ENCODE measurements at regions of chr6 and their contacts with region 1.

Region 1: GRCh38 chr6:2988426-2989331 is 11.0 kb upstream of the NQO2 start:
- DNase-seq: peak; percentile 93 to 96 (median 94)
- ATAC-seq: peak; percentile 80 to 93 (median 88)
- H3K4me3 ChIP-seq: peak overlapping the region; percentile 69 to 93 (median 80)
- H3K27ac ChIP-seq: peak overlapping the region; percentile 92 to 100 (median 99)
- H3K4me1 ChIP-seq: peaks cover 0 to 29% (median 18%) of the 10 kb centered on the region in 12 donors
- H3K27me3 ChIP-seq: no peaks in the 10 kb centered on the region
- CTCF ChIP-seq: peak; percentile 76 to 94 (median 88)
- POLR2A ChIP-seq: peak in 1 of 2 donors; percentile 84

Region 2: GRCh38 chr6:2841264-2842138 is 147.2 kb before region 1 on chr6 and contains the start of gene SERPINB1:
- intact Hi-C with region 1: loop called (anchors 1 to 5 kb)
- DNase-seq: peak; percentile 91 to 96 (median 95)
- ATAC-seq: peak; percentile 86 to 94 (median 90)
- H3K4me3 ChIP-seq: peak within 1 kb of the TSS; percentile 39 to 82 (median 67)
- H3K27ac ChIP-seq: peak within 1 kb of the TSS; percentile 89 to 99 (median 97)
- H3K4me1 ChIP-seq: peaks cover 9 to 66% (median 34%) of the 10 kb centered on the region in 12 donors
- H3K27me3 ChIP-seq: no peaks in the 10 kb centered on the region
- CTCF ChIP-seq: peak in 7 of 12 donors; percentile 10 to 53 (median 27)
- POLR2A ChIP-seq: peak in 1 of 2 donors; percentile 34
- total RNA-seq, gene SERPINB1: 15.6 to 55.6 (median 23.0) TPM

Region 3: DNA sequence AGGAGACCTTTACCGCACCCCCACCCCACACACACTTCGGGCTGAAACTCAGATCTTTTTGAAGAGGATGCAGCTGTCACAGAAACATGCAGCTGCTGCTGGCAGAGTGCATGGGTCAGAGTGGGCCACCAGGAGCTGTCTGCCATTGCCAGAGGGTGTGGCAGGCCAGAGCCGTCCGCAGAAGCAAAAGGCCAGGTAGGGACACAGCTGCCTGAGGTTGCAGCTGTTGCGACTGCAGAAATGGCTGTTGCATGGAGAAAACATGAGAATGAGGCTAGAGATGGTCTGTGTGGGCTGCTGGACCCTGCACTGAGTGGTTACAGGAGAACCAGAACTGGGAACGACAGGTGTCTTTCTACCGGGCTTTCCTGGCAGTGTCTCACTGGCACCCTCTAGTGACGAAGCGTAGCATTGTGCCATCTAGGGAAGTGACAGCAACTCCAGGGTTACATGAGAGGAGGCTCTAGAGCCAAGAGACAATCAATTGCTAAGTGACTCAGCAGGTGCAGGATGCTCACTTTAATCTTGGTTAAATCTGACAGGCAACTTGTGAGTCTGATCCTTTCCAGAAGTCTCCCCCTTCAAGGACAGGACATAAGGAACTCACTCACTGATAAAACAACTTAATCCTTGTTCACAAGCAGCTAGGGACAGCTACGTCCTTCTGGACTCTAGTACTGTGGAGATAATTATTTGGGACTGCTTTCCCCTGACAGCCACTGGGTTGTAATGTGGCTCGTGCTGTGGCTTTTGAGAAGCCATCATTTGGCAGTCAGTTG is 56.5 kb before region 1 on chr6:
- intact Hi-C with region 1: loop called in 6 of 10 experiments (anchors 5 to 10 kb)
- DNase-seq: peak; percentile 78 to 84 (median 81)
- ATAC-seq: peak; percentile 89 to 97 (median 95)
- H3K4me3 ChIP-seq: peak overlapping the region in 5 of 12 donors; percentile 15 to 33 (median 18)
- H3K27ac ChIP-seq: peak overlapping the region in 7 of 12 donors; percentile 4 to 57 (median 40)
- H3K4me1 ChIP-seq: peaks cover 0 to 10% (median 5%) of the 10 kb centered on the region in 12 donors
- H3K27me3 ChIP-seq: no peaks in the 10 kb centered on the region
- CTCF ChIP-seq: peak; percentile 95 to 99 (median 97)
- POLR2A ChIP-seq: no peak

Region 4: DNA sequence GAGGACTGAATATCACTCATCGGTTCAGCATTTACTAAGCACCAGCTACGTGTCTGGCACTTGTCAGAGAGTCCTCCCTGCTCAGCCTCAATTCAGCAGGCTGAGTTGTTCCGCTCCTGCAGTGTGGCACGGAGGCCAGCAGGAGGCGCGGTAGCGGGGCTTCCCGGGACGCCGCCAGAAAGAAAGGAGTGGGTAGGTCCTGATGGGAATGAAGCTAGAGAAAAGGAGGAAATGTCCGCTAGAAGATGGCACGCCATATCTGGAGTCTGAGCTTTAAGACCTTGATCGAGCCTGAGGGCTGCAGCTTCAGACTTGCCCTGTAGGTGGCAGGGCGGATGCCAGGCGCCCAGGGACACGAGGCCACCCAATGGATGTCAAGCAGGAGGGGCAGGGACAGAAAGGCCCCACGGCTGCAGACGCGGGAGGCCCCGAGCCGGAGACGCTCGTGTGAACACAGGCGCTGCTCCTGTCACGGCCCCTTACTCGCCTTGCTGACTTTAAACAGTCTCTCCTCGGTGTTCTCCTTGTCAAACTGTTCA is 36.1 kb before region 1 on chr6:
- intact Hi-C with region 1: loop called in 9 of 10 experiments (anchors 1 to 5 kb)
- DNase-seq: peak; percentile 72 to 87 (median 82)
- ATAC-seq: peak; percentile 26 to 78 (median 74)
- H3K4me3 ChIP-seq: peak overlapping the region in 3 of 12 donors; percentile 10 to 19 (median 11)
- H3K27ac ChIP-seq: peak overlapping the region in 11 of 12 donors; percentile 29 to 77 (median 57)
- H3K4me1 ChIP-seq: peaks cover 0 to 44% (median 22%) of the 10 kb centered on the region in 12 donors
- H3K27me3 ChIP-seq: no peaks in the 10 kb centered on the region
- CTCF ChIP-seq: peak; percentile 85 to 99 (median 96)
- POLR2A ChIP-seq: peak in 1 of 2 donors; percentile 27

Region 5: GRCh38 chr6:3258720-3259490 is 270.2 kb after region 1 on chr6 and contains the start of gene PSMG4:
- intact Hi-C with region 1: loop called in 3 of 10 experiments (anchors 10 kb)
- DNase-seq: peak; percentile 96 to 99 (median 97)
- ATAC-seq: peak; percentile 93 to 98 (median 98)
- H3K4me3 ChIP-seq: peak within 1 kb of the TSS; percentile 60 to 99 (median 94)
- H3K27ac ChIP-seq: peak within 1 kb of the TSS in 11 of 12 donors; percentile 40 to 85 (median 82)
- H3K4me1 ChIP-seq: peaks cover 0 to 38% (median 18%) of the 10 kb centered on the region in 12 donors
- H3K27me3 ChIP-seq: no peaks in the 10 kb centered on the region
- CTCF ChIP-seq: no peak
- POLR2A ChIP-seq: peak in 1 of 2 donors; percentile 60
- total RNA-seq, gene PSMG4: 6.2 to 12.6 (median 9.7) TPM

Measured in heart left ventricle (tissue), 16 donors.